ENCODE measurements at regions of chr12 and their contacts with region 1.

Region 1: DNA sequence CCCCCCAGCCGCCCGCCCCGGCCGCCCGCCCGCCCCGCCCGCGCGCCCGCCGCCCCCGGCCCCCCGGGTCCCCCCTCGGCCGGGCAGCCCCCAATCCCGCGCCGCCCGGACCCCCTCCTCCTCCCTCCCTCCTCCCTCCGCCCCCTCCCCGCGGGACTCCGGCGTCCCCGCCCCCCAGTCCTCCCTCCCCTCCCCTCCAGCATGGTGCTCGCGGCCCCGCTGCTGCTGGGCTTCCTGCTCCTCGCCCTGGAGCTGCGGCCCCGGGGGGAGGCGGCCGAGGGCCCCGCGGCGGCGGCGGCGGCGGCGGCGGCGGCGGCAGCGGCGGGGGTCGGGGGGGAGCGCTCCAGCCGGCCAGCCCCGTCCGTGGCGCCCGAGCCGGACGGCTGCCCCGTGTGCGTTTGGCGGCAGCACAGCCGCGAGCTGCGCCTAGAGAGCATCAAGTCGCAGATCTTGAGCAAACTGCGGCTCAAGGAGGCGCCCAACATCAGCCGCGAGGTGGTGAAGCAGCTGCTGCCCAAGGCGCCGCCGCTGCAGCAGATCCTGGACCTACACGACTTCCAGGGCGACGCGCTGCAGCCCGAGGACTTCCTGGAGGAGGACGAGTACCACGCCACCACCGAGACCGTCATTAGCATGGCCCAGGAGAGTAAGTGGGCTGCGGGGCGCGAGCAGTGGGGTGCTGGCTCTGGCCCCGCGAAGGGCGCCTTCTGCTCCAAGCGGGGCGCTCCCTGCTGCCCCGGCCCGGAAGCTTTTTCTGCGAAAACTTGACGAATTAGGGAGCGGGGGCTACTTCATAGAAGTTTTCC is at the start of gene GDF11:
- DNase-seq: peak; percentile 79 to 91 (median 85)
- H3K4me3 ChIP-seq: peak within 1 kb of the TSS; percentile 67 to 76 (median 69)
- H3K27ac ChIP-seq: no peak within 1 kb of the TSS
- H3K4me1 ChIP-seq: peaks cover 2 to 15% (median 4%) of the 10 kb centered on the region in 3 donors
- H3K27me3 ChIP-seq: no peaks in the 10 kb centered on the region
- CTCF ChIP-seq: peak; percentile 8
- total RNA-seq, gene GDF11: 6.2 TPM

Region 2: DNA sequence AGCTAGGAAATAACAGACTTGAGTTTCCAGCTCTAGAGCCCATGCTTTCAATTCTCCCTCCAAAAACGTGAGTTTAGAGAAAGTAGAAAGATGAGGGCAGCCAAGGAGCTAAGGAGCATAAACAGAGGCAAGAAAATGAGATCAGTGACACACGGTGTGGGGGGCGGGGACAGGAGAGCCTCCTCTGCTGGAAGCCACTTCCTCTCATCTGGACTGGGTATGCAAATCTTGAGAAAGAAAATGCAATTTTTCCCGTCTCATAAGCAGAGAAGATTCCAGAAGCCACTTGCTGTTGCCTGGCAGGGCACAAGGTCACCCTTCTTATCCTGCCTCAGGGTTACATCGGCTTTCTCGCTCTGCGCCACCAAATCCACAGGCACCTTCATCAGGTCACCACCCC is 100.7 kb before region 1 on chr12:
- intact Hi-C with region 1: no loop called
- DNase-seq: no peak
- H3K4me3 ChIP-seq: no peak overlapping the region
- H3K27ac ChIP-seq: no peak overlapping the region
- H3K4me1 ChIP-seq: no peaks in the 10 kb centered on the region
- H3K27me3 ChIP-seq: no peaks in the 10 kb centered on the region
- CTCF ChIP-seq: no peak

Region 3: GRCh38 chr12:55797068-55797467 is 53.7 kb after region 1 on chr12:
- intact Hi-C with region 1: loop called (anchors 10 kb)
- DNase-seq: peak in 3 of 5 donors; percentile 66 to 87 (median 82)
- H3K4me3 ChIP-seq: no peak overlapping the region
- H3K27ac ChIP-seq: no peak overlapping the region
- H3K4me1 ChIP-seq: no peaks in the 10 kb centered on the region
- H3K27me3 ChIP-seq: no peaks in the 10 kb centered on the region
- CTCF ChIP-seq: peak; percentile 39

Region 4: GRCh38 chr12:55973598-55974307 is 230.4 kb after region 1 on chr12 and contains the start of gene RAB5B:
- intact Hi-C with region 1: no loop called
- DNase-seq: peak; percentile 100
- H3K4me3 ChIP-seq: peak within 1 kb of the TSS; percentile 77 to 94 (median 85)
- H3K27ac ChIP-seq: peak within 1 kb of the TSS; percentile 88 to 92
- H3K4me1 ChIP-seq: peaks cover 3 to 10% (median 6%) of the 10 kb centered on the region in 3 donors
- H3K27me3 ChIP-seq: no peaks in the 10 kb centered on the region
- CTCF ChIP-seq: peak; percentile 20
- total RNA-seq, gene RAB5B: 112 TPM